ENCODE measurements at regions of chr10 and their contacts with region 1.

Region 1: GRCh38 chr10:120342115-120342714 is 114.8 kb upstream of the PLPP4 start:
- DNase-seq: no peak
- ATAC-seq: no peak
- H3K4me3 Mint-ChIP-seq: no peak overlapping the region
- H3K27ac Mint-ChIP-seq: no peak overlapping the region
- H3K4me1 Mint-ChIP-seq: no peaks in the 10 kb centered on the region
- H3K27me3 Mint-ChIP-seq: peaks cover 9% of the 10 kb centered on the region
- CTCF ChIP-seq: no peak

Region 2: DNA sequence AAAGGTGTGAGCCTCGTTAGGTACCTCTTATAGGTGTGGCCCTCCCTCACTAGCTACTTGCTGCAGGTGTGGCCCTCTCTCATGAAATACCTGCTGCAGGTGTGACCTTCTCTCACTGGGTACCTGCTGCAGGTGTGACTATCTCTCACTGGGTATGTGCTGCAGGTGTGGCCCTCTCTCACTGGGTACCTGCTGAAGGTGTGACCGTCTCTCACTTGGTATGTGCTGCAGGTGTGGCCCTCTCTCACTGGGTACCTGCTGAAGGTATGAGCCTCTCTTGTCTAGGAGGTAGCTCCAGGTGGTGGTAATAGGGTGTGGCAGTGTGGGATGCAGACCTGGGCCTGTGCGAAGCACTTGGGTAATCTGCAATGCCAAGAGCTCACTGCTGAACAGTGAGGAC is 55.9 kb before region 1 on chr10:
- CTCF ChIA-PET with region 1: no interaction called
- POLR2A ChIA-PET with region 1: no interaction called
- intact Hi-C with region 1: loop called (anchors 10 kb)
- DNase-seq: no peak
- ATAC-seq: no peak
- H3K4me3 Mint-ChIP-seq: no peak overlapping the region
- H3K27ac Mint-ChIP-seq: no peak overlapping the region
- H3K4me1 Mint-ChIP-seq: no peaks in the 10 kb centered on the region
- H3K27me3 Mint-ChIP-seq: peaks cover 4% of the 10 kb centered on the region
- CTCF ChIP-seq: no peak

Region 3: GRCh38 chr10:120365872-120366271 is 23.7 kb after region 1 on chr10:
- CTCF ChIA-PET with region 1: no interaction called
- POLR2A ChIA-PET with region 1: no interaction called
- intact Hi-C with region 1: no loop called
- DNase-seq: no peak
- ATAC-seq: no peak
- H3K4me3 Mint-ChIP-seq: no peak overlapping the region
- H3K27ac Mint-ChIP-seq: no peak overlapping the region
- H3K4me1 Mint-ChIP-seq: no peaks in the 10 kb centered on the region
- H3K27me3 Mint-ChIP-seq: peaks cover 3% of the 10 kb centered on the region
- CTCF ChIP-seq: no peak